ENCODE measurements at regions of chr7 and their contacts with region 1.

Region 1: DNA sequence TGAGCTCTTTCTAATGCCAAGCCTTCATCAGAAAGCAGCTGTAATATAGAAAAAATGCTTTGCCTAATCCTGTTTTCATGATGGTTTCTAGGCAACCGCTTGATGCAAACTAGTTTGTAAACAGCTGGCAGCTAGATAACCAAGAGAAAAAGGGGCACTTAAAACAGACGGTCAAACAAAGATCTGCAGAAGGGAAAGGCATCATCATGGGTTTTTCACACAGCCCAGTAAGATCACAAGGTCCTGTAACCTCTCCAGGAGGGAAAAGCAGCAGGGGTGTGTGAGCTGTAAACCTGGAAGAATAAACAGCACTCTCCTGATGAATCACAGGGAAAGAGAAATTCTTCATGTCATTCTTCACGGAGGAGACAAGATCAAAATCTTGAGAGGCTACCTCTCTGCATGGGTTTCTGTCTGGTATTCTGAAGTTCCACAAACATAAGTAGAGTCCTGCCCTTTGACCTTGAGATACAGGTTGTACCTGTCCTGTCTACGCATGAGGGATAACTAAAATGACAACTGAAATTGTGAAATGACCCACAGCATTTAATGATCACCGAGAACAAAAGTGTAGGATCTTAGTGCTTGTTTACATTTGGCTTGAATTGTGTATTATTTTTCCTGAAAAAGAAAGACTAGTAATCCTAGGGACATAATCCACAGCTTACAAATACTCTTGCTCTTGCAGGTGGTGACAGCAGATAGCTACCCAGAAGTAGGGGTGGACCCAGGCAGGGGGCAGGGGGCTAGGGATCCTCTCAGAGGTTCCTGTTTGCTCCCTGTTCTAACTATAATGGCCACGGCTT is 48.0 kb downstream of the CREB3L2 start:
- DNase-seq: peak; percentile 65 to 99
- H3K4me3 ChIP-seq: peak overlapping the region; percentile 21; the same call in 1 of the 2 replicates
- H3K27ac ChIP-seq: peak overlapping the region; percentile 90
- H3K4me1 ChIP-seq: peaks cover 76% of the 10 kb centered on the region
- H3K27me3 ChIP-seq: no peaks in the 10 kb centered on the region
- CTCF ChIP-seq: no peak

Region 2: GRCh38 chr7:137978464-137979237 is 24.8 kb after region 1 on chr7:
- CTCF ChIA-PET with region 1: no interaction called
- POLR2A ChIA-PET with region 1: interaction called, 8 read pairs
- intact Hi-C with region 1: loop called (anchors 1 kb)
- DNase-seq: peak; percentile 83 to 97
- H3K4me3 ChIP-seq: peak overlapping the region; percentile 32; the same call in 1 of the 2 replicates
- H3K27ac ChIP-seq: peak overlapping the region; percentile 92
- H3K4me1 ChIP-seq: peaks cover 56% of the 10 kb centered on the region
- H3K27me3 ChIP-seq: no peaks in the 10 kb centered on the region
- CTCF ChIP-seq: no peak